AG04449 (cell line): ENCODE measurements at regions of chr1 and their contacts with region 1.

Region 1: GRCh38 chr1:60171801-60172200 is 98.2 kb upstream of the C1orf87 start:
- DNase-seq: peak; percentile 66
- H3K4me3 ChIP-seq: no peak overlapping the region
- CTCF ChIP-seq: no peak

Region 2: GRCh38 chr1:60129911-60130310 is 41.9 kb before region 1 on chr1:
- CTCF ChIA-PET with region 1: interaction called, 10 read pairs
- POLR2A ChIA-PET with region 1: no interaction called
- DNase-seq: no peak
- H3K4me3 ChIP-seq: no peak overlapping the region
- CTCF ChIP-seq: peak; percentile 15

Region 3: DNA sequence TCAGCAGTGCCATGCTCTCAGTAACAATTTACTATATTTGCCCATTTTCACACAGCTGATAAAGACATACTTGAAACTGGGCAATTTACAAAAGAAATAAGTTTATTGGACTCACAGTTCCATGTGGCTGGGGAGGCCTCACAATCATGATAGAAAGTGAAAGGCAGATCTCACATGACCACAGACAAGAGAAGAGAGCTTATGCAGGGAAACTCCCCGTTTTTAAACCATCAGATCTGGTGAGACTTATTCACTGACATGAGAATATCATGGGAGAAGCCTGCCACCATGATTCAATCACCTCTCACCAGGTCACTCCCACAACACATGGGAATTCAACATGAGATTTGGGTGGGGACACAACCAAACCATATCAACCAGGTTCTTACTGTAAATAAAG is 13.9 kb after region 1 on chr1:
- CTCF ChIA-PET with region 1: no interaction called
- POLR2A ChIA-PET with region 1: no interaction called
- DNase-seq: no peak
- H3K4me3 ChIP-seq: no peak overlapping the region
- CTCF ChIP-seq: no peak